ENCODE measurements at regions of chr3 and their contacts with region 1.

Region 1: GRCh38 chr3:52339612-52340011 is 23.5 kb downstream of the DNAH1 start:
- DNase-seq: peak in 1 of 2 donors; percentile 34
- ATAC-seq: peak; percentile 79

Region 2: DNA sequence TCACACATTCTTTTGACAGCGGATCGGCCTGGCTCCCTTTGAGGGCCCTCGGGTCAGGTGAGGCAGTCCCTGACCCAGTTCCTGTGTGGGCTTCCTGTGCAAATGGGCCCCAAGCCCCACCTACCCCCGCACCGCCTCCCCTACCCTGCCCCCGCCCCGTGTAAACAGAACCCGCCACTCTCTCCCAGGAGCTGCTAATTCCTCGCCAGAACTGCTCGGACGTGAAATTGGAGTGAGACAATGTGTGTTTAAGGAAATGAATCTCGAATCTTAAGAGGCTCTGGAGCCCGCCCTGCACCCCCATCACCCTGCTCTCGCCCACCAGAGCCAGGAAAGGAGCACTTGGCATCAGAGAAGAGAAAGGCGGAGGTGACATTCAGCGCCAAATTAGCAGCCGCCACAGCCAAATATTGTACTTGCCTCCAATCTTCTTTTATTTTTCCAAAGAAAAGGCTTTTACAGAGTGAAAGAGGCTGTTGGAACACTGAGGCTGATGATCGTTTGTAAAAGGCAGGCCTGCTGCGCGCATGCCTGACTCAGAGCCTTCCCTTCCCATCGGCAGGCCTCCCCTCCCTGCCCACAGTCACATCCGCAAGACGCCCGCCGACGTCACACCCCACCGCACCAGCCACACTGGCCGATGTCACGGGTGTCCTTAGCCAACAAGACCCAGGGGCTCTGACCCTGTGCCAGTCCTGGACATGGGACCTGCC is 1889.2 kb before region 1 on chr3:
- intact Hi-C with region 1: no loop called
- DNase-seq: peak; percentile 60 to 69
- ATAC-seq: peak; percentile 31

Region 3: GRCh38 chr3:52231502-52232293 is 107.9 kb before region 1 on chr3:
- intact Hi-C with region 1: loop called (anchors 5 kb)
- DNase-seq: peak; percentile 69 to 86
- ATAC-seq: peak; percentile 82

Measured in left colon (tissue), 2 donors.